ENCODE measurements at regions of chr1 and their contacts with region 1.

Region 1: GRCh38 chr1:37486680-37487618 is 12.6 kb downstream of the ZC3H12A start:
- DNase-seq: peak; percentile 59 to 77 (median 65)
- H3K4me3 ChIP-seq: peak overlapping the region in 1 of 3 experiments; percentile 46
- H3K4me3 Mint-ChIP-seq: peak overlapping the region in 1 of 2 donors; percentile 63
- H3K27ac ChIP-seq: peak overlapping the region; percentile 81 to 85
- H3K27ac Mint-ChIP-seq: peak overlapping the region; percentile 90 to 96 (median 93)
- H3K4me1 ChIP-seq: peaks cover 29 to 34% of the 10 kb centered on the region in 2 donors
- H3K4me1 Mint-ChIP-seq: peaks cover 29% of the 10 kb centered on the region
- H3K27me3 ChIP-seq: no peaks in the 10 kb centered on the region
- H3K27me3 Mint-ChIP-seq: no peaks in the 10 kb centered on the region
- CTCF ChIP-seq: peak; percentile 98

Region 2: DNA sequence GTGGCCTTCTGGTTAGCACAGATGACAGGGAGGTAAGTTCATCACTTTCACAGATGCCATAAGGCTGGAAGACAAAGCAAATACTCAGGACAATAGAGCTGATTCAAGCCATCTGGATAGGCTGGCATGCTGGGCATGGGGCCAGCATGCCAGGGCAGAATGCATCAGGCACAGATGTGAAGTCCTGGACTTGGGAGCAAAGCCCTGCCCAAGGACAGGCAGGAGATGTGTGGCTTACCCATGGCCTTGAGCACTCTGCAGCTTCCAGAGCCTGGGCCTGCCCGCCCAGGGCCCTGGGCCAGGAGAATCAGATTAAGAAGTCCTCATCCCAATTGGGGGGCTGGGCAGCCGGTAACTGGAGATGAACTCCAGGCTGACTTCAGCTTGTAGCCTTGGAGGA is 148.3 kb before region 1 on chr1:
- intact Hi-C with region 1: no loop called
- DNase-seq: no peak
- H3K4me3 ChIP-seq: no peak overlapping the region
- H3K4me3 Mint-ChIP-seq: no peak overlapping the region
- H3K27ac ChIP-seq: no peak overlapping the region
- H3K27ac Mint-ChIP-seq: no peak overlapping the region
- H3K4me1 ChIP-seq: no peaks in the 10 kb centered on the region
- H3K4me1 Mint-ChIP-seq: no peaks in the 10 kb centered on the region
- H3K27me3 ChIP-seq: no peaks in the 10 kb centered on the region
- H3K27me3 Mint-ChIP-seq: peaks cover 2 to 8% (median 7%) of the 10 kb centered on the region in 3 donors
- CTCF ChIP-seq: no peak

Region 3: DNA sequence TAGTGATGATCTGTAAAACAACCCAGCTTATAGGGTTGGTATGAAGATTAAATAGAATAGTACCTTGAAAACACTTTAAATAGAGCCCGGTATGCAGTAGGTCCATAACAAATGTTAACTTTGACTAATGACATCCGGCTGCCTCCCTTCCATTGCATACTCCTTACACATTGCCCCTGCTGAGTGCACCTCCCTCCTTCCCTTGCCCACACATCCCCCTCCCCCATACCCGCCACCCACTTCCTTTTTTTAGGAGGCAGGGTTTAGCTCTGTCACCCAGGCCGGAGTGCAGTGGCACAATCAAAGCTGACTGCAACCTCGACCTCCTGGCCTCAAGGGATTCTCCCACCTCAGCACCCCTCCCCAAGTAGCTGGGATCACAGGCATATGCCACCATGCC is 37.0 kb before region 1 on chr1:
- intact Hi-C with region 1: loop called (anchors 1 to 5 kb)
- DNase-seq: peak; percentile 69 to 83 (median 81)
- H3K4me3 ChIP-seq: no peak overlapping the region
- H3K4me3 Mint-ChIP-seq: peak overlapping the region in 1 of 2 donors; percentile 53
- H3K27ac ChIP-seq: no peak overlapping the region
- H3K27ac Mint-ChIP-seq: peak overlapping the region in 6 of 7 donors; percentile 50 to 91 (median 80)
- H3K4me1 ChIP-seq: peaks cover 16 to 28% of the 10 kb centered on the region in 2 donors
- H3K4me1 Mint-ChIP-seq: peaks cover 18% of the 10 kb centered on the region
- H3K27me3 ChIP-seq: peaks cover 0 to 4% of the 10 kb centered on the region in 2 donors
- H3K27me3 Mint-ChIP-seq: peaks cover 3 to 5% (median 4%) of the 10 kb centered on the region in 3 donors
- CTCF ChIP-seq: no peak

Region 4: DNA sequence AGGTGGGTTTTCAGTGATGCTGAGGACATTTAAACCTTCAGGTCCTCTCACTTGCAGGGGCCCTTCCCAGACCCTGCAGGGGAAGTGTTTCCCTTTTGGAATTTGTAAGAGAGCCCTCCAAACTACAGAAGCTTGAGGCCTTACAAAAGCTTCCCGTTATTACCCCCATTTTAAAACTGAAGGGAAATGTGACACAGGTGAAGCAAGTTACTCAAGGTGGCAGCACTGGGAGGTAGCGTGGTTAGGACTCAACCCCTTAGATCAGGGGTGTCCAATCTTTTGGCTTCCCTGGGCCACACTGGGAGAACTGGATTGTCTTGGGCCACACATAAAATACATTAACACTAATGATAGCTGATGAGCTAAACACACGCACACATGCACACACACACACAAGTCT is 28.4 kb before region 1 on chr1:
- intact Hi-C with region 1: loop called (anchors 1 to 5 kb)
- DNase-seq: no peak
- H3K4me3 ChIP-seq: no peak overlapping the region
- H3K4me3 Mint-ChIP-seq: no peak overlapping the region
- H3K27ac ChIP-seq: no peak overlapping the region
- H3K27ac Mint-ChIP-seq: peak overlapping the region in 1 of 7 donors; percentile 30
- H3K4me1 ChIP-seq: peaks cover 10 to 13% of the 10 kb centered on the region in 2 donors
- H3K4me1 Mint-ChIP-seq: peaks cover 13% of the 10 kb centered on the region
- H3K27me3 ChIP-seq: no peaks in the 10 kb centered on the region
- H3K27me3 Mint-ChIP-seq: peaks cover 0 to 3% (median 0%) of the 10 kb centered on the region in 3 donors
- CTCF ChIP-seq: no peak

Region 5: DNA sequence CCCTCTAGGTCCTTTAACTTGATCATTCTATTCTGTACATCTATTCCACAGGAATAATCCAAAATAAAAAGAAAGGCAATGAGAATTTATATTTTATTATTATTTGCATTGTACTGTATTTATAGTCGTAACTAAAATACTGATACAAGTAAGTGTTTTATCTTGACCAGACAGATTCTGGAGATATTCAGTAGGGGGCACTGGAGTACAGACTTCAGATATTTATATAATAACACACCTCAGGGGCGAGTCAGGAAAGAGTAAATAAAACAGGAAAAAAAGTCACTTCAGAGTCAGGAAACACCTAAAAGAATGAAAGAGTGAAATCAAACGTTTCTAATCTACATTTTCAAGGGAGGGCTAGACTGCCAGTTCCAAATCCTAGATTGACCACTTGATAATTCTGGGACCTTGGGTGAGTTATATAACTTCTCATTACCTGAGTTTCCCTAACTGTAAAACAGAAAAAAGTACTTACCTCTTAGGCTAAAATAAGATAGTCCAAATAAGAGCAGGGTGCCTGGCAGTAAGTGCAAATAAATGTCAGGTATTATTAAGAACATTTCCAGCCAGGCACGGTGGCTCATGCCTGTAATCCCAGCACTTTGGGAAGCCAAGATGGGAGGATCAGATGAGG is 403.5 kb after region 1 on chr1:
- intact Hi-C with region 1: no loop called
- DNase-seq: peak in 2 of 3 donors; percentile 23 to 31
- H3K4me3 ChIP-seq: no peak overlapping the region
- H3K4me3 Mint-ChIP-seq: no peak overlapping the region
- H3K27ac ChIP-seq: no peak overlapping the region
- H3K27ac Mint-ChIP-seq: peak overlapping the region in 1 of 7 donors; percentile 2
- H3K4me1 ChIP-seq: no peaks in the 10 kb centered on the region
- H3K4me1 Mint-ChIP-seq: peaks cover 2% of the 10 kb centered on the region
- H3K27me3 ChIP-seq: no peaks in the 10 kb centered on the region
- H3K27me3 Mint-ChIP-seq: no peaks in the 10 kb centered on the region
- CTCF ChIP-seq: peak; percentile 68